ENCODE measurements at regions of chr5 and their contacts with region 1.

Region 1: GRCh38 chr5:17189381-17190036 is 27.9 kb upstream of the BASP1 start:
- DNase-seq: peak; percentile 66 to 73 (median 73)
- ATAC-seq: peak; percentile 53 to 66 (median 64)
- H3K4me3 ChIP-seq: no peak overlapping the region
- H3K27ac ChIP-seq: no peak overlapping the region
- H3K4me1 ChIP-seq: no peaks in the 10 kb centered on the region
- H3K27me3 ChIP-seq: no peaks in the 10 kb centered on the region
- CTCF ChIP-seq: peak; percentile 64 to 87 (median 82)
- POLR2A ChIP-seq: no peak

Region 2: GRCh38 chr5:16791036-16791705 is 398.3 kb before region 1 on chr5:
- intact Hi-C with region 1: loop called (anchors 10 kb)
- DNase-seq: no peak
- ATAC-seq: peak; percentile 70 to 79 (median 76)
- H3K4me3 ChIP-seq: no peak overlapping the region
- H3K27ac ChIP-seq: no peak overlapping the region
- H3K4me1 ChIP-seq: no peaks in the 10 kb centered on the region
- H3K27me3 ChIP-seq: no peaks in the 10 kb centered on the region
- CTCF ChIP-seq: peak; percentile 66 to 76 (median 74)
- POLR2A ChIP-seq: no peak

Measured in right lobe of liver (tissue), 6 donors.